ENCODE measurements at regions of chr1 and their contacts with region 1.

Region 1: GRCh38 chr1:234065794-234066447 is 161.4 kb downstream of the SLC35F3 start:
- DNase-seq: no peak

Region 2: GRCh38 chr1:233364695-233365539 is 701.0 kb before region 1 on chr1:
- intact Hi-C with region 1: loop called (anchors 10 kb)
- DNase-seq: no peak

Region 3: GRCh38 chr1:233440951-233441401 is 624.9 kb before region 1 on chr1:
- intact Hi-C with region 1: loop called (anchors 2 kb)
- DNase-seq: no peak

Measured in cardiac septum (tissue), 1 donor.